ENCODE measurements at regions of chr1 and their contacts with region 1.

Region 1: GRCh38 chr1:167059045-167059808 is 30.9 kb downstream of the GPA33 start:
- DNase-seq: peak; percentile 60
- H3K4me3 Mint-ChIP-seq: no peak overlapping the region
- H3K27ac Mint-ChIP-seq: no peak overlapping the region
- H3K4me1 Mint-ChIP-seq: peaks cover 8% of the 10 kb centered on the region
- H3K27me3 Mint-ChIP-seq: no peaks in the 10 kb centered on the region

Region 2: GRCh38 chr1:165928075-165928731 is 1131.0 kb before region 1 on chr1:
- intact Hi-C with region 1: loop called (anchors 10 kb)
- DNase-seq: peak; percentile 20
- H3K4me3 Mint-ChIP-seq: no peak overlapping the region
- H3K27ac Mint-ChIP-seq: no peak overlapping the region
- H3K4me1 Mint-ChIP-seq: peaks cover 8% of the 10 kb centered on the region
- H3K27me3 Mint-ChIP-seq: peaks cover 11% of the 10 kb centered on the region

Region 3: DNA sequence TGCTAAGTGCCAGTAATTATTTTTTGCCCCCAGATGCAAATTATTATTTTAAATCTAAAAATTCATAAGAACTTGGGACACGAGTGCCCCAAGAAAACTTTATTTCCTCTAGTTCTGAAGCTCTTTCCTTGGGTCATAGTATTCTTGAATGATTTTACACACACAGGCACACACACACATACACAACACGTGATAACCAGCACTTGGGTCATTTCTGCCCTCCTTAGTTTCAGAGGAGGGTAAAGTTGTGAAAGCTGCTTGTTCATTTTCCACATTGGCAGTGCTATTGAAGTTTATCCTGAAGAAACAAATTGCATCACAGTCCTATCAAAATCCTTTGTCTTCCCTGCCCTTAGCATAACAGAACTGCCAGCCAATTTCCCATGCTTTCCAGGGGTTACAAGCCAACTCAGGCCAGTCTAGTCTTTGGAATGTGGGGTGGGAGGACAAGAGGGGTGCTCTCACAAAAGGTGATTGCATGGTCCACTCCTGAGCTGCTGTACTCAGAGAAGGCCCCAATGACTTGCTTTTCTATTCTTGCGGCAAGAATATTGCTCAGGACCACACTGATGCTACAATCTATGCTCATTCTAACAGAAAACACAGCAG is 318.5 kb before region 1 on chr1:
- intact Hi-C with region 1: loop called (anchors 5 kb)
- DNase-seq: no peak
- H3K4me3 Mint-ChIP-seq: no peak overlapping the region
- H3K27ac Mint-ChIP-seq: no peak overlapping the region
- H3K4me1 Mint-ChIP-seq: no peaks in the 10 kb centered on the region
- H3K27me3 Mint-ChIP-seq: no peaks in the 10 kb centered on the region

Region 4: DNA sequence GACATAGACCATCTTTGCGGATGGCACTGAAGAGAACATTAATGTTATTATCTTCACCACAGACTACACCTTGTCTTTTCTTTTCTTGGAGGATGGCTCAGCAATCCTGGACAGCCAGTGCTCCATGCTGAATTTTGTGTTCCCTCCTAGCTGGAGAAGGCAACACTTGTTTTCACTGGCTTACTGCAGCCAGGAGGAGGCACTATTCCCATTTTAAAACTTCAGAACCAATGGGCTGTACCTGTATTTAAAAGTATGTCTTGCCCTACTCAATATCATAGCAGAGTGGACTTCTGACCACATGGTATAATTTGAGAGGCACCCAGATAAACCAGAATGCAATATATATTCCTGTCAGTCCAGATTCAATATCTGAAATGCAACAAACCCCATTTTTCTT is 273.2 kb before region 1 on chr1:
- intact Hi-C with region 1: no loop called
- DNase-seq: no peak
- H3K4me3 Mint-ChIP-seq: no peak overlapping the region
- H3K27ac Mint-ChIP-seq: no peak overlapping the region
- H3K4me1 Mint-ChIP-seq: no peaks in the 10 kb centered on the region
- H3K27me3 Mint-ChIP-seq: peaks cover 14% of the 10 kb centered on the region

Region 5: GRCh38 chr1:166884040-166884642 is 175.1 kb before region 1 on chr1:
- intact Hi-C with region 1: loop called (anchors 1 kb)
- DNase-seq: no peak
- H3K4me3 Mint-ChIP-seq: no peak overlapping the region
- H3K27ac Mint-ChIP-seq: no peak overlapping the region
- H3K4me1 Mint-ChIP-seq: peaks cover 12% of the 10 kb centered on the region
- H3K27me3 Mint-ChIP-seq: peaks cover 17% of the 10 kb centered on the region

Region 6: GRCh38 chr1:166975361-166976129 is 83.7 kb before region 1 on chr1 and contains the start of gene ILDR2:
- intact Hi-C with region 1: loop called (anchors 2 kb)
- DNase-seq: peak; percentile 41
- H3K4me3 Mint-ChIP-seq: peak within 1 kb of the TSS; percentile 94
- H3K27ac Mint-ChIP-seq: peak within 1 kb of the TSS; percentile 80
- H3K4me1 Mint-ChIP-seq: peaks cover 58% of the 10 kb centered on the region
- H3K27me3 Mint-ChIP-seq: peaks cover 28% of the 10 kb centered on the region
- total RNA-seq, gene ILDR2: 11.3 and 14.4 TPM in 2 replicates

Region 7: GRCh38 chr1:167043752-167044488 is 15.3 kb before region 1 on chr1:
- intact Hi-C with region 1: loop called (anchors 2 kb)
- DNase-seq: peak; percentile 65
- H3K4me3 Mint-ChIP-seq: peak overlapping the region; percentile 79
- H3K27ac Mint-ChIP-seq: no peak overlapping the region
- H3K4me1 Mint-ChIP-seq: peaks cover 19% of the 10 kb centered on the region
- H3K27me3 Mint-ChIP-seq: peaks cover 29% of the 10 kb centered on the region

Region 8: GRCh38 chr1:167076136-167076710 is 17.0 kb after region 1 on chr1:
- intact Hi-C with region 1: no loop called
- DNase-seq: no peak
- H3K4me3 Mint-ChIP-seq: no peak overlapping the region
- H3K27ac Mint-ChIP-seq: peak overlapping the region; percentile 21
- H3K4me1 Mint-ChIP-seq: peaks cover 12% of the 10 kb centered on the region
- H3K27me3 Mint-ChIP-seq: peaks cover 11% of the 10 kb centered on the region

Region 9: DNA sequence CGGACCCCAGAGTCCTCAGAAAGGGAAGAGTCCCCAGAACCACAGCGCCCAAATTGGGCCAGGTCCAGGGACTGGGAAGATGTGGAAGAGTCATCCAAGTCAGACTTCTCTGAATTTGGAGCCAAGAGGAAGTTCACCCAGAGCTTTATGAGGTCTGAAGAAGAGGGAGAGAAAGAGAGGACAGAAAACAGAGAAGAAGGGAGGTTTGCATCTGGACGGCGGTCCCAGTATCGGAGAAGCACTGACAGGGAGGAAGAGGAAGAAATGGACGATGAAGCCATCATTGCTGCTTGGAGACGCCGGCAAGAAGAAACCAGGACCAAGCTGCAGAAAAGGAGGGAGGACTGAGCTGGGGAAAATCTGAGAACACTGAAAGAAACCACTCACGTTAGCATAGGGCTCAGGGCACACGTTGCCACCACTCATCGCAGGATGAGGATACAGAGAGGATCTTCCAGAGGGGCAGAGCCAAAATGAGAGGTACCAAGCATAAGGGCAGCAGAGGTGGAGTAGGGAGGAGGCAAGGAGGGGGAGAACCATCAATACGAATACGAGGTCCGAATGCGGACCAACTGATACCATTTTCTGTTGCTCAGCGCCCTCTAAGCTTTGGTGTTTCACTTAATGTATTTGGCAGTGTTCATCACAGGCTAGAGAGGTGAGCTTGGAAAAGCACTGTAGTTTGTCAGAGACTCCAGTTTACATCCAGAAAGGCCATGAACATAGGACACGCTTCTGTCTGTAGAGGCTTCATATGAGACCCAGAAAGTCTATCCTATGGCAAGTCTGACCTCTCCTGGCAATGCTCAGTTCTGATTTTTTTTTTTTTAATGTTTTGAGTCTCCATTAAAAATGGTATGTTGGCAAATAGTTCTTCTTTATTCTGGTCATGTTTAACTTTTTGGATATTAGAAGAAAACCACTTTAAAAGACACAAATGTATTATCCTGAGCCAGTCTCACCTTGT is 69.3 kb after region 1 on chr1:
- intact Hi-C with region 1: no loop called
- DNase-seq: no peak
- H3K4me3 Mint-ChIP-seq: no peak overlapping the region
- H3K27ac Mint-ChIP-seq: no peak overlapping the region
- H3K4me1 Mint-ChIP-seq: no peaks in the 10 kb centered on the region
- H3K27me3 Mint-ChIP-seq: peaks cover 22% of the 10 kb centered on the region

Measured in activated T-helper 1 cell treated with anti-CD3 and anti-CD28 coated beads, Interleukin-12 subunit alpha, Interleukin-12 subunit beta, Interleukin-2, Interleukin-4 antibody, amounts not matched to agents 30 ng/mL and 10 ng/mL and 1 ng/mL, durations not matched to agents 14 hours and 24 hours and 36 hours (primary cell).